ENCODE measurements at regions of chr1 and their contacts with region 1.

Region 1: DNA sequence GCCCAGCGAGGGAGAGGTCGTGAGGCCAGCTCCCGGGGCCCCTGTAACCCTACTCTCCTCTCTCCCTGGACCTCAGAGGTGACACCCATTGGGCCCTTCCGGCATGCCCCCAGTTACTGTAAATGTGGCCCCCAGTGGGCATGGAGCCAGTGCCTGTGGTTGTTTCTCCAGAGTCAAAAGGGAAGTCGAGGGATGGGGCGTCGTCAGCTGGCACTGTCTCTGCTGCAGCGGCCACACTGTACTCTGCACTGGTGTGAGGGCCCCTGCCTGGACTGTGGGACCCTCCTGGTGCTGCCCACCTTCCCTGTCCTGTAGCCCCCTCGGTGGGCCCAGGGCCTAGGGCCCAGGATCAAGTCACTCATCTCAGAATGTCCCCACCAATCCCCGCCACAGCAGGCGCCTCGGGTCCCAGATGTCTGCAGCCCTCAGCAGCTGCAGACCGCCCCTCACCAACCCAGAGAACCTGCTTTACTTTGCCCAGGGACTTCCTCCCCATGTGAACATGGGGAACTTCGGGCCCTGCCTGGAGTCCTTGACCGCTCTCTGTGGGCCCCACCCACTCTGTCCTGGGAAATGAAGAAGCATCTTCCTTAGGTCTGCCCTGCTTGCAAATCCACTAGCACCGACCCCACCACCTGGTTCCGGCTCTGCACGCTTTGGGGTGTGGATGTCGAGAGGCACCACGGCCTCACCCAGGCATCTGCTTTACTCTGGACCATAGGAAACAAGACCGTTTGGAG is 23.7 kb upstream of the TNFRSF1B start:
- DNase-seq: no peak
- ATAC-seq: no peak
- H3K4me3 Mint-ChIP-seq: no peak overlapping the region
- H3K27ac Mint-ChIP-seq: peak overlapping the region; percentile 62
- H3K4me1 Mint-ChIP-seq: peaks cover 43% of the 10 kb centered on the region
- H3K27me3 Mint-ChIP-seq: no peaks in the 10 kb centered on the region
- CTCF ChIP-seq: no peak

Region 2: GRCh38 chr1:12161662-12162458 is 18.8 kb after region 1 on chr1:
- CTCF ChIA-PET with region 1: interaction called, 8 read pairs
- POLR2A ChIA-PET with region 1: interaction called, 10 read pairs
- intact Hi-C with region 1: no loop called
- DNase-seq: peak; percentile 93
- ATAC-seq: peak; percentile 78
- H3K4me3 Mint-ChIP-seq: peak overlapping the region; percentile 11
- H3K27ac Mint-ChIP-seq: peak overlapping the region; percentile 95
- H3K4me1 Mint-ChIP-seq: peaks cover 79% of the 10 kb centered on the region
- H3K27me3 Mint-ChIP-seq: no peaks in the 10 kb centered on the region
- CTCF ChIP-seq: no peak

Measured in activated CD8-positive, alpha-beta T cell treated with anti-CD3 and anti-CD28 coated beads for 36 hours (primary cell).